GM13976 (cell line): ENCODE measurements at regions of chr10 and their contacts with region 1.

Region 1: GRCh38 chr10:124530215-124530665 is 68.6 kb downstream of the LHPP start:
- DNase-seq: peak; percentile 96
- CTCF ChIP-seq: peak; percentile 99

Region 2: DNA sequence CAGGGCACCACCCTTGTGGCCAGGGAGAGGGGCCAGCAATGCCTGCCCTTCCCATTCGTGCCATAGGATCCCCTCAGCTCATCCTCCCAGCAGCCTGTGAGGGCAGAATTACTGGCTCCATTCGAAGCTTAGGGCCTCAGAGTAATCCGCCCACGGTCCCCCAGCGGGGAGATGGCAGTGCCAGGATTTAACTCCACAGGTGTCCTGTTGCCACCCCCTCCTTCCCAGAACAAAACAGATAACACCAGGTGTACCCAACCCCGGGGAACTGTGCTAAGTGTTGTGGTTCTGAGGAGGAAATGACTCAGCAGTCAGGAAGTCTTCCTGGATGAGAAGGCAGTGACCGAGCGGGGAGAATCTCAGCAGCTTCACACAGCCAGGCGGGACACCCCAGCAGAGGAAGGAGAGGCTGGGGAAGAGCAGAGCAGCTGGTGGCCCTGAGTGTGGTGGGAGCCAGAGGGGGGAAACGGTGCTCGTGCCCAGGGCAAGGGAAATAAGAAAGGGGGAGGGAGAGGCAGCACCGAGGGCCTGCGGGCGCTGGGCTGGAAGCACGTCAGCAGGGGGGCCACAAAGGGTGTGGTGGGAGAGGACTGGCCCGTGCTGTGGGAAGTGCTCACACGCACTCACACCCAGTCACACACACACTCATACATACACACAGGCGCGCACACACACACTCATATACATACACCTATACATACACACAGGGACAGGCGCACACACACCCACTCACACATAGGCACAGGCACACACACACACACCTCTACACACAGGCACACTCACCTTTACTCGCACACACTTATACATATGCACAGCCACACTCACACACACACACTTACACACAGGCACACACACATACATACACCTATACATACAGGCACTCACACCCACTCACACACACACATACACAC is 377.1 kb before region 1 on chr10:
- in situ Hi-C with region 1: no loop called
- DNase-seq: peak; percentile 75
- CTCF ChIP-seq: no peak

Region 3: GRCh38 chr10:124827474-124827873 is 297.2 kb after region 1 on chr10:
- in situ Hi-C with region 1: loop called (anchors 25 kb)
- DNase-seq: no peak
- CTCF ChIP-seq: no peak